PC-9 (cell line): ENCODE measurements at regions of chr17 and their contacts with region 1.

Region 1: DNA sequence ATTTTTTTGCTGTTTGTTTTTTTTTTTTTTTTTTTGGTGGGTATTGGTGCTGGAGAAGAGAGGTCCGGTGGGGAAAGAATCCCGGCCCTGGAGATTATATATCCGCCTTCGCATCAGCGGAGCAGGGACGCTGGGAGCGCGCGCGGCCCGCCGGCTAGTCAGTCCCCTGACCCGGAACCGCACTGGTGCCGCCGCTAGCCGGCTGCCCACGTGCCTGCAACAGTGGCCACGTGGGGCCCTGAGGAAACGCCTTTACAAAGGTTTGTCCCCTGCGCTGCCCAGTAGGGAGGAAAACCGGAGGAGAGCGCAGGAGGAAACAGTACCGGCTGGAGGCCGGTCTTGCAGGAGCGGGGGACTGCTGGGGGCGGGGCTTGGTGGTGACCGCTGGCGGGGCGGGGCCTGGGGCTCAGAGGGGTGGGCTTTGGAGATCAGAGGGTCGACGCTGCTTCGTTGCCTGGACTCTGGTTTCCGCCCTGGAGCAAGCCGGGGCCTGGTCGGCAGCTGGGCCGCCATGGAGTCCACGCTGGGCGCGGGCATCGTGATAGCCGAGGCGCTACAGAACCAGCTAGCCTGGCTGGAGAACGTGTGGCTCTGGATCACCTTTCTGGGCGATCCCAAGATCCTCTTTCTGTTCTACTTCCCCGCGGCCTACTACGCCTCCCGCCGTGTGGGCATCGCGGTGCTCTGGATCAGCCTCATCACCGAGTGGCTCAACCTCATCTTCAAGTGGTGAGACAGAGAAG is at the start of gene G6PC3:
- DNase-seq: peak; percentile 93
- H3K4me3 ChIP-seq: peak within 1 kb of the TSS; percentile 66
- H3K27ac ChIP-seq: peak within 1 kb of the TSS; percentile 87
- H3K4me1 ChIP-seq: peaks cover 40% of the 10 kb centered on the region
- H3K27me3 ChIP-seq: no peaks in the 10 kb centered on the region
- CTCF ChIP-seq: no peak
- total RNA-seq, gene G6PC3: 69.3 and 70.9 TPM in 2 replicates

Region 2: GRCh38 chr17:43814714-43815113 is 255.9 kb before region 1 on chr17:
- CTCF ChIA-PET with region 1: no interaction called
- POLR2A ChIA-PET with region 1: no interaction called
- intact Hi-C with region 1: no loop called
- DNase-seq: peak; percentile 7 to 84
- H3K4me3 ChIP-seq: no peak overlapping the region
- H3K27ac ChIP-seq: peak overlapping the region; percentile 81
- H3K4me1 ChIP-seq: peaks cover 27% of the 10 kb centered on the region
- H3K27me3 ChIP-seq: no peaks in the 10 kb centered on the region
- CTCF ChIP-seq: no peak

Region 3: GRCh38 chr17:44053125-44053872 is 17.3 kb before region 1 on chr17:
- CTCF ChIA-PET with region 1: no interaction called
- POLR2A ChIA-PET with region 1: interaction called, 17 read pairs
- intact Hi-C with region 1: no loop called
- DNase-seq: no peak
- H3K4me3 ChIP-seq: no peak overlapping the region
- H3K27ac ChIP-seq: no peak overlapping the region
- H3K4me1 ChIP-seq: no peaks in the 10 kb centered on the region
- H3K27me3 ChIP-seq: no peaks in the 10 kb centered on the region
- CTCF ChIP-seq: no peak

Region 4: DNA sequence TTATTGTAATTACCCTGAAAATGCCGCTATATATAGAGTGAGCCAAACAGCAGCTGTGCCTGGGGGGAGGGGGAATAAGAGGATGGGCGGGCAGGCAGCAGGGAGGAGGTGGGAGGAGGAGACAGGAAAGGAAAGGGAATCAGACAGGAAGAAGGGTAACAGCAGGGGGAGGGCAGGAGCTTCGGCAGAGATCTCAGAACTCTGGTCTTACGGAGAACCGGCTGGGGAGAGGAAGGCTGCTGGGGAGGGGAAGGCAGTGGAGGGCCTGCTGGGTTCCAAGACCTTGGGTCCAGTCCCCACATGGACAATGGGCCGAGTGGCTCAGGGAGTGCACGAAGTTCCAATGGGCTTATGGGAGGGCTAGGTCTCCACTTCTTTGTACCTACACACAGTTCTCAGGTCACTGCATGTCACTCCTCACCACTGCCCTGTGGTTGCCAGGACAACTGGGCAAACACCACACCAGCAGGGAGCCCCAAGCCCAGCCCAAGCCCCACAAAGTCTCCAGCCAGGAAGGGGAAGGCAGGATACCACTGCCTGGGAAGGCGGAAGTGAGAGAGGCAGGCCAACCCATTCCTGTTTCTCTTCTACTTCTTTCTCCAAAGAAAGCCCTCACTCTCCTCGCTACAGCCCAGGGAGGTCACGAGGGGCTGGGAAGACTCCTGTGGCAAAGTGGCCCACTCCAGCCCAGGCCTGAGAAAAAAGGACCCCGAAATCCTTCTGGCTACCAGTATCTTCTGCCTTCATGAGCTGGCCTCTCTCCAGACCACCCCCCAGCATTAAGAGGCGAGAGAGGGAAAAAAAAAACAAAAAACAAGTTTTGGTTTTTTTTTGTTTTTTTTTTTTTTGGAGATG is 25.2 kb after region 1 on chr17:
- CTCF ChIA-PET with region 1: interaction called, 10 read pairs
- POLR2A ChIA-PET with region 1: no interaction called
- intact Hi-C with region 1: no loop called
- DNase-seq: peak; percentile 88 to 91
- H3K4me3 ChIP-seq: peak overlapping the region; percentile 44; the same call in 1 of the 2 replicates
- H3K27ac ChIP-seq: peak overlapping the region; percentile 93
- H3K4me1 ChIP-seq: peaks cover 30% of the 10 kb centered on the region
- H3K27me3 ChIP-seq: no peaks in the 10 kb centered on the region
- CTCF ChIP-seq: no peak; the same call in 1 of the 2 replicates

Region 5: GRCh38 chr17:44123356-44124117 is 52.9 kb after region 1 on chr17 and contains the start of gene HDAC5:
- CTCF ChIA-PET with region 1: no interaction called
- POLR2A ChIA-PET with region 1: interaction called, 23 read pairs
- intact Hi-C with region 1: no loop called
- DNase-seq: peak; percentile 75 to 91
- H3K4me3 ChIP-seq: peak within 1 kb of the TSS; percentile 84
- H3K27ac ChIP-seq: peak within 1 kb of the TSS; percentile 68
- H3K4me1 ChIP-seq: peaks cover 7% of the 10 kb centered on the region
- H3K27me3 ChIP-seq: peaks cover 4% of the 10 kb centered on the region; the same call in 1 of the 2 replicates
- CTCF ChIP-seq: peak; percentile 75
- total RNA-seq, gene HDAC5: 24.0 and 40.5 TPM in 2 replicates

Region 6: DNA sequence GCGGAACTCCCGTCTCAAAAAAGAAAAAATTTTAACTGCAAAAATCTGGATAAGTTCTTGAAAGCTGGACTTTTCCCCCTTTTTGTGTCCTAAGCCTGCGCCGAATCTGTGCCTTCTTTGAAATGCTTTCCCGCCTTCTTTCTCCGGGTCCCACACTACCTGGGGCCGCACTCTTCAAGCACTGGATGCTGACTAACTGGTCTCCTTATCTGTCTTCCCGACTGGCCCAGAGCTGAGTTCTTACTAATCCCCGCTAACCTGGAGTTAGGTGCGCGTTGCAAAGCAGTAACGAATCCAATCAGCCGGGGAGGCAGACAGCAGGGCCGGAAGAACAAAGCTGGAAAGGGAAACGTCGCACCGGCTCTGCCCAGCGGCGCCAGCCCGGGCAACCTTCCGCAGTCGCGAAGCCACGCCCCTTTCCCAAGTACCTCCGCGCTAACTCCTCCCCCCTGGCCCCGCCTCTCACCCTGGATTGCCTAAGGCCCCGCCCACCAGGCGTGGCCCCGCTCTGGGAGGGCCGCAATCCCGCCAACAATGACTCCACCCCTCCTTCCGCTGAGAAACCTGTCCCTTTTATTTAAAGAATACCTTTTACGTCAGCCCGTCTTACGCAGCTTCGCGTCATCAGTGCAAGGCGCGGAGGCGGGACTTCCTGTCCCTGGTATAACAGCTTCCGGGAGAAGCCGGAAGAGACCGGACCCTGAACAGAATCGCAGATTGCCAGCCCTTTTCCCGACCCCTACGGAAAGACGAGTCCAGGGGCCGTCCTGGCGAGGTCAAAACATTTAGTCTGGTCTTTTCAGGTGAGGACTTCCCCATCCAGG is 115.9 kb after region 1 on chr17 and contains the start of gene TMUB2:
- CTCF ChIA-PET with region 1: no interaction called
- POLR2A ChIA-PET with region 1: no interaction called
- intact Hi-C with region 1: loop called (anchors 2 kb)
- DNase-seq: peak; percentile 95 to 99
- H3K4me3 ChIP-seq: peak within 1 kb of the TSS; percentile 94
- H3K27ac ChIP-seq: peak within 1 kb of the TSS; percentile 71
- H3K4me1 ChIP-seq: peaks cover 16% of the 10 kb centered on the region; the same call in 1 of the 2 replicates
- H3K27me3 ChIP-seq: no peaks in the 10 kb centered on the region
- CTCF ChIP-seq: no peak
- total RNA-seq, gene TMUB2: 39.2 and 45.5 TPM in 2 replicates

Region 7: DNA sequence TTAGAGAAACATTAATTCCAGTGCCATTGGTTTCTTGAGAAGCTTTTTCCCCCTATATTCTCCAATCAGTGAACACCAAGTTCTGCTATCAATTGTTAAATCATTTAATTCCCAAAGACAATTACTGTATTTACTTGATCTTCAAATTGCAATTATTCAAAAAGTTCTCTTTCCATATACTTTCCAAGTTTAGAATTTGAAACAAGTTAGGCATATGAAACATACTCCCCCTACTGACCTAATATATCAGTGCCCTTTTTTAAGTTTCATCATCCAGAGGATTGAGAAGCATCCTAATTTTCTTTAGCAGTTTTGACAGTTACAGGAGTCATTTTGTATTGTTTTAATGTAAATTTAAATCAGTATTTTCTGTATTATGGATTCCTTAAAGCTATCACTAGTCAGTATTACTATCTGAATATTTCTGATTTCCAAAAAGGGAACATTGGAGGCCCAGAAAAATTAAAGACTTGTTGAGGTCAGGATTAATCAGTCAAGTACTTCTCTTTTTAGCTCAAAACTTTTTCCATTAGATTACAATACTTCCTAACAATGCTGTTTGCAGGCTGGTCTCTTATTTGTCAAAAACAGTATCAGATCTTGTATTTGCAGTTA is 602.0 kb after region 1 on chr17:
- CTCF ChIA-PET with region 1: no interaction called
- POLR2A ChIA-PET with region 1: interaction called, 17 read pairs
- intact Hi-C with region 1: no loop called
- DNase-seq: no peak
- H3K4me3 ChIP-seq: no peak overlapping the region
- H3K27ac ChIP-seq: no peak overlapping the region
- H3K4me1 ChIP-seq: no peaks in the 10 kb centered on the region
- H3K27me3 ChIP-seq: no peaks in the 10 kb centered on the region
- CTCF ChIP-seq: peak; percentile 73